ENCODE measurements at regions of chr3 and their contacts with region 1.

Region 1: GRCh38 chr3:101779047-101779821 is at the start of gene NXPE3:
- DNase-seq: peak; percentile 51
- ATAC-seq: peak; percentile 96
- H3K4me3 ChIP-seq: peak within 1 kb of the TSS; percentile 89
- H3K27ac ChIP-seq: peak within 1 kb of the TSS; percentile 45
- H3K4me1 ChIP-seq: peaks cover 10% of the 10 kb centered on the region
- H3K27me3 ChIP-seq: no peaks in the 10 kb centered on the region
- CTCF ChIP-seq: no peak
- EP300 ChIP-seq: no peak
- POLR2A ChIP-seq: peak; percentile 84
- RAD21 ChIP-seq: no peak
- polyA plus RNA-seq, gene NXPE3: 2.0 to 2.2 TPM

Region 2: DNA sequence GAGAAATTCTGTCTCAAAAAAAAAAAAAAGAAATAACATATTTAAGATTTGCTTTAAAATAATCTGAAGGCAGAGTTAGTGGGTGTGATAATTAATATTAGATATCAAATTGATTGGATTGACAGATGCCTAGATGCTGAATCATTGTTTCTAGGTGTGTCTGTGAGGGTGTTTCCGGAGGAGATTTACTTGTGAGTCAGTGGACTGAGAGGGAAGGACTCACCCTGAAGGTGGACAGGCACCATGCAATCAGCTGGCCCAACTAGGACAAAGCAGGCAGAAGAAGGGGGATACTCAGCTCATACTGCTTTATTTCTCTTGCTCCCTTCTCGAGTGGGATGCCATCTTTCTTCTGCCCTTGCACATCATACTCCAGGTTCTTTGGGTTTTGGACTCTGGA is 76.1 kb before region 1 on chr3:
- CTCF ChIA-PET with region 1: no interaction called
- POLR2A ChIA-PET with region 1: no interaction called
- RAD21 ChIA-PET with region 1: no interaction called
- SMC1A ChIA-PET with region 1: no interaction called
- in situ Hi-C with region 1: no loop called
- intact Hi-C with region 1: loop called (anchors 5 kb)
- DNase-seq: no peak
- ATAC-seq: no peak
- H3K4me3 ChIP-seq: no peak overlapping the region
- H3K27ac ChIP-seq: no peak overlapping the region
- H3K4me1 ChIP-seq: peaks cover 13% of the 10 kb centered on the region
- H3K27me3 ChIP-seq: no peaks in the 10 kb centered on the region
- CTCF ChIP-seq: no peak
- EP300 ChIP-seq: no peak
- POLR2A ChIP-seq: no peak
- RAD21 ChIP-seq: no peak

Region 3: DNA sequence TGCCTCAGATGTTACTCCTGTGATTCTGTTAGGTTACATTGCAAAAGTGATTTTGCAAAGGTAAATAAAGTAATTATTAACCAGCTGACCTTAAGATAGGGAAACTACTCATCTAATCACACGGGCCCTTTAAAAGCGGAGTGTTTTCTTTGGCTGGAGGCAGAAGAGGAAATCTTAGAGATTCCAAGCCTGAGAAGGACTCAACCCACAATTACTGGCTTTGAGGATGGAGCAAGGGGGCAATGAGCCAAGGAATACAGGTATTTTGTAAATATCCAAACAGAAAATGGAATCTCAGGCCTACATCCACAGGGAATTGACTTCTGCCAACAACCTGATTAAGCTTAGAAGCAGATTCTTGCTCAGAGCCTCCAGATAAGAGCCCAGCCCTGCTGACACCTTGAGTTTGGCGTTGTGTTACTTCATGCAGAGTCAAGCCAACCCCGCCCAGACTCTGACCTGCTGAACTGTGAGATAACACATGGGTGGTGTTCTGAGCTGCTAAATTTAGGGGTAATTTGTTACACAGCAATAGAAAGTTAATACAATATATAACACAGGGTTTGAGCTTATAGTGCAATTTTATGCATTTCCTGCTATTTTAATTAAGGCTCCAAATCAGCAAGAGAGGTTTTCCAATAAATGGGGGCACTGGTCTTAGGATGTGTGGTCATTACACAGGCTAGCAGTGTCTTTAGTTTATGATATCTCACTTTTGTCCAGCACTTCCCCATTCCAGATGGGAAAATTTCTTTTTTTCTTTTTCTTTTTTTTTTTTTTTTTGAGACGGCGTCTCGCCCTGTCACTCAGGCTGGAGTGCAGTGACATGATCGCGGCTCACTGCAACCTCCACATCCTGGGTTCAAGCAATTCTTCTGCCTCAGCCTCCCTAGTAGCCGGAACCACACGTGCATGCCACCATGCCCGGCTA is 89.6 kb after region 1 on chr3:
- CTCF ChIA-PET with region 1: no interaction called
- POLR2A ChIA-PET with region 1: no interaction called
- RAD21 ChIA-PET with region 1: no interaction called
- SMC1A ChIA-PET with region 1: no interaction called
- in situ Hi-C with region 1: no loop called
- intact Hi-C with region 1: no loop called
- DNase-seq: no peak
- ATAC-seq: peak; percentile 50
- H3K4me3 ChIP-seq: no peak overlapping the region
- H3K27ac ChIP-seq: no peak overlapping the region
- H3K4me1 ChIP-seq: no peaks in the 10 kb centered on the region
- H3K27me3 ChIP-seq: no peaks in the 10 kb centered on the region
- CTCF ChIP-seq: no peak
- EP300 ChIP-seq: no peak
- POLR2A ChIP-seq: no peak
- RAD21 ChIP-seq: no peak

Region 4: DNA sequence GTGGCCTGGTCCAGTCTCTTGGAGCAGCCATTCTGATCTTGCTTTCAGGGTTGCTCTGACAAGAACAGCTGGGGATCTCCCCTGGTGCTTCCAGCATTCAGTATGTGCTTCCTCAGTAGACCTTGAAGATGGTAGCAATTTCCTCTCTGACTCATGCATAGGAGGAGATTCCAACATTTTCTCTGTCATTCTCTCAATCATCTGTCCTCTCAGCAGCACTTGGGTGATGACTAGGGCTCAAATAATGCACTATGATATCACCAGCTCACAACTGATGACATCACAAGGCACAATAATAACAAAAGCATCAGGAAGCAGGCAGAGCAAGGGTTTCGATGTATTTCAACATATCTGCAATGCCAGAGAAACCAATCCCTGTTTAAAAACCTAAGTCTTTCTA is 122.8 kb after region 1 on chr3:
- CTCF ChIA-PET with region 1: no interaction called
- POLR2A ChIA-PET with region 1: no interaction called
- RAD21 ChIA-PET with region 1: no interaction called
- SMC1A ChIA-PET with region 1: no interaction called
- in situ Hi-C with region 1: no loop called
- intact Hi-C with region 1: no loop called
- DNase-seq: no peak
- ATAC-seq: peak; percentile 42
- H3K4me3 ChIP-seq: no peak overlapping the region
- H3K27ac ChIP-seq: no peak overlapping the region
- H3K4me1 ChIP-seq: peaks cover 26% of the 10 kb centered on the region
- H3K27me3 ChIP-seq: no peaks in the 10 kb centered on the region
- CTCF ChIP-seq: no peak
- EP300 ChIP-seq: no peak
- POLR2A ChIP-seq: no peak
- RAD21 ChIP-seq: no peak

Measured in GM12878 (cell line).